CD8-positive, alpha-beta T cell (primary cell): ENCODE measurements at regions of chr2 and their contacts with region 1.

Region 1: DNA sequence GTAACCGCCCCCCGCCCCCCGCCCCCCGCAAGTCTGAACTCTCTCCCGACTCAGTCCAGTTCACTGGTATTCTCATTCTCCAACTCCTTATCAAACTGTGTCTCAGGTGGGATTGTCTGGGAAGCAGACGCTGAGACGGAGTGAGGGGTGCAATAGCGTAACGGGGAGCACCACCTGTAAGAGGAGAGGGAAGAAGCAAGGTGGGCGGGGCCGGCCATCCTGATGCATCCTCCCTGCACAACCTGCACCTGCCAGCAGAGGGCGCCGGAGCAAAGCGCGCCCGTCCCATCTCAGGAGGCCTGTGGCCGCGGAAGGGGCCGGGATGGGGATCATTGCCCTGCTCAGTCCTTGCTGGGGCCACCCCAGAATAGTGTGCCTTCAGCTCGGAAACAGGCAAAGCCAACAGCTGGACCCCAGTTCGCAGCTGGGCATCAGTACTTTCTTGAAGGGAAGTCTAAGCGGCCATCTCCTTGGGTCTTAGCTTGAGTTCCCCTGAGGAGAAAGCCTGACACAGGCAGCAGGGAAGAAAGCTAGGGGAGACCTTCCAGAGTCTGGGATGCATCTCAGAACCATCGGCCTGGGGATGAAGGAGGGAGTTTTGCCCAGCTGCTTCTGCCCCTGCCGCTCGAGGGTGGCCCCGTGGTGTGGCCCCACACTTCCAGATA is 208.0 kb downstream of the TFCP2L1 start:
- DNase-seq: peak; percentile 18 to 70 (median 51)
- ATAC-seq: peak; percentile 34
- H3K4me3 ChIP-seq: no peak overlapping the region
- H3K4me3 Mint-ChIP-seq: no peak overlapping the region
- H3K27ac ChIP-seq: no peak overlapping the region
- H3K27ac Mint-ChIP-seq: no peak overlapping the region
- H3K4me1 ChIP-seq: no peaks in the 10 kb centered on the region
- H3K4me1 Mint-ChIP-seq: peaks cover 2% of the 10 kb centered on the region
- H3K27me3 ChIP-seq: peaks cover 4 to 7% of the 10 kb centered on the region in 2 experiments
- H3K27me3 Mint-ChIP-seq: peaks cover 38% of the 10 kb centered on the region
- CTCF ChIP-seq: peak; percentile 62

Region 2: GRCh38 chr2:120699292-120699691 is 377.7 kb before region 1 on chr2:
- CTCF ChIA-PET with region 1: no interaction called
- POLR2A ChIA-PET with region 1: no interaction called
- intact Hi-C with region 1: loop called (anchors 5 kb)
- DNase-seq: no peak
- ATAC-seq: no peak
- H3K4me3 ChIP-seq: no peak overlapping the region
- H3K4me3 Mint-ChIP-seq: no peak overlapping the region
- H3K27ac ChIP-seq: no peak overlapping the region
- H3K27ac Mint-ChIP-seq: no peak overlapping the region
- H3K4me1 ChIP-seq: no peaks in the 10 kb centered on the region
- H3K4me1 Mint-ChIP-seq: peaks cover 6% of the 10 kb centered on the region
- H3K27me3 ChIP-seq: peaks cover 0 to 9% of the 10 kb centered on the region in 2 experiments
- H3K27me3 Mint-ChIP-seq: peaks cover 26% of the 10 kb centered on the region
- CTCF ChIP-seq: no peak

Region 3: DNA sequence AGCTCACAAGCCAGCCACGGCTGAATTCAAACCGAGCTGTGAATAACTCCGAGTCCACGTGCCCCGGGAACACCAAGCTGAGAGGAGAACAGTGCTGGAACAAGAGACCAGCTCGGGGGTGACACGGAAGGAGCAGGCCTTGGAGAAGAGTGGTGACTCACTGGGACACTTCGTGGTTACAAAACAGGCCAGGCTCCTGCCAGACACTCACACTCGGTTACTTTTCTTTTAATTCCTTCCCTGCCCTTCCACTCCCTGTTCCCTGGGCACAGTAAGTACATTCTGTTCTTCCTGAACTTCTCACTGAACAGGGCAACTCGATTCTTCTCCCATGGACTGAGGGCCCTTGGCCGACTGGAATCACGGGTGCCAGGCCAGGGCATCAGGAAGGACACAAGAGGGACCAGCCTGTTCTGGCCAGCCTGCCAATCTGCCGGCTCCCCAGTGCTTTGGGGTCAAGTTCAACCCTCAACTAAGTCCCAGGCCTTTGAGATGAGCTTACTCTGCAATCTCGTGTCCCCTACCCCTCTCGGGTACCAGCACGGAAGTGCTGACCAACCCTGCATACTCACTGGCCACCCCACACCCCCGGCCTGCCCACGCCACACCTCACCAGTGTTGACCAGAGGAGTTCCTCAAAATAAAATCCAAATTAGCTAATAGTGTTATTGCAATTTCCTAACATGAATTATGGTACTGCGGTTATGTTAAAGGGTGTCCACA is 120.5 kb after region 1 on chr2:
- CTCF ChIA-PET with region 1: no interaction called
- POLR2A ChIA-PET with region 1: no interaction called
- intact Hi-C with region 1: no loop called
- DNase-seq: peak in 1 of 9 experiments; percentile 22
- ATAC-seq: no peak
- H3K4me3 ChIP-seq: no peak overlapping the region
- H3K4me3 Mint-ChIP-seq: no peak overlapping the region
- H3K27ac ChIP-seq: no peak overlapping the region
- H3K27ac Mint-ChIP-seq: no peak overlapping the region
- H3K4me1 ChIP-seq: no peaks in the 10 kb centered on the region
- H3K4me1 Mint-ChIP-seq: no peaks in the 10 kb centered on the region
- H3K27me3 ChIP-seq: no peaks in the 10 kb centered on the region
- H3K27me3 Mint-ChIP-seq: peaks cover 2% of the 10 kb centered on the region
- CTCF ChIP-seq: no peak